ENCODE measurements at regions of chr19 and their contacts with region 1.

Region 1: DNA sequence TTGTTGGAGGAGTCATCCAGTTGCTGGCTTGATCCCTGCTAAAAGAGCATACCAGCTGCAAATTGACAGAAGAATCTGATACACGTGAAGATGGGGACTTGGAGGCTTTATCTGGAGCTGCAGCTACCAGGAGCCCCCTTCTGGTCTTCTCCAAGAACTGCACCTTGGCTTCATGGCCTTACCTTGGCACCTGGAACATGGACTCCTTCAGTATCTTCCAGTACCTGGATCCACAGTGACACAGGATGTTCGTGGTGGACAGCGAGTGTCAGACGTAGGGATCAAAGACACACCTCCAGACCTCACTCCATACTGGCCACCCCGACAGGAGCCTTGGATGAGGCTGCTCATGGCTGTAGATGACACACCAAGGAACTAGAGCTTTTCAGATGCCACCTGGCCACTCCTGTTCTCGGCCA is 9.9 kb upstream of the ACSBG2 start:
- DNase-seq: no peak
- H3K4me3 ChIP-seq: no peak overlapping the region
- H3K27me3 ChIP-seq: no peaks in the 10 kb centered on the region
- CTCF ChIP-seq: peak; percentile 93

Region 2: GRCh38 chr19:6038634-6039405 is 86.8 kb before region 1 on chr19:
- CTCF ChIA-PET with region 1: interaction called, 19 read pairs
- POLR2A ChIA-PET with region 1: no interaction called
- DNase-seq: no peak
- H3K4me3 ChIP-seq: no peak overlapping the region
- H3K27me3 ChIP-seq: no peaks in the 10 kb centered on the region
- CTCF ChIP-seq: no peak

Region 3: DNA sequence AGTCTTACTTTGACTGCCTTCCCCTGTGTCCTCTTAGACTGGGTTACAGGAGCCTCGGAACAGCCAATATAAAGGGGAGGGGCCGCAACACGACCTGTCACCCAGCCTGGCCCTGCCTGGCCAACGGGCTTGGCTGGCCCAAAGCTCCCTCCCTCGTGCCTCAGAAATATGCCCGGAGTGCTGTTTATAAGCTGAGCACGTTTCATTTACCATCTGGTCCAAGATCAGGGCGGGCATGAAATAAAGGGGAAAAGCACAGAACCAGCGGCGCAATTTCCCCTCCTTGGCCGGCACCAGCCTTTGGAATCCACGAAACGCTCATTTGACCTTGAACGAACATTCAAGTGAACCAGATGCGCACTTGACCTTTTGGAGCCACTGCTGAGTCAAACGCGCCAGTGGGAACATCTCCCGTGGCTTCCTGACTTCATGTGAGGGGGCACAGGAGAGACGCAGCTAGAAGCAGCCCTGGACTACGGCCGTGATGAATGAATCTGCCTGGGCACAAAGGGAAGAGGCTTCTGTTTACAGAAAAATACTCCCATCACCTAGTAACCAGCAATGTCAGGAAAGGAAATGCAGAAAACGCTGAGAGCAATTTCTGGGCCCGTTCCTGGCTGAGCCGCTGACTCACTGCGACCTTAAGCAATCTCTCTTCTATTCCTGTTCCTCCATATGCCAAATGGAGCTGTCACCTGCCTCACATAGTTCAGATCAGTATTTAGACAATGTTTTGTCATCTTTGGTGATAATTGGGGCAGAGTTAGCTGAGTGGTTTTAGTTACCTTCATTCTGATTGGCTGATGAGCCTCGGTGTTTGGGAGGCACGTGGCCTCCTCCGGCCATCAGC is 68.6 kb before region 1 on chr19:
- CTCF ChIA-PET with region 1: interaction called, 94 read pairs
- POLR2A ChIA-PET with region 1: no interaction called
- DNase-seq: peak; percentile 95
- H3K4me3 ChIP-seq: no peak overlapping the region
- H3K27me3 ChIP-seq: no peaks in the 10 kb centered on the region
- CTCF ChIP-seq: no peak

Region 4: DNA sequence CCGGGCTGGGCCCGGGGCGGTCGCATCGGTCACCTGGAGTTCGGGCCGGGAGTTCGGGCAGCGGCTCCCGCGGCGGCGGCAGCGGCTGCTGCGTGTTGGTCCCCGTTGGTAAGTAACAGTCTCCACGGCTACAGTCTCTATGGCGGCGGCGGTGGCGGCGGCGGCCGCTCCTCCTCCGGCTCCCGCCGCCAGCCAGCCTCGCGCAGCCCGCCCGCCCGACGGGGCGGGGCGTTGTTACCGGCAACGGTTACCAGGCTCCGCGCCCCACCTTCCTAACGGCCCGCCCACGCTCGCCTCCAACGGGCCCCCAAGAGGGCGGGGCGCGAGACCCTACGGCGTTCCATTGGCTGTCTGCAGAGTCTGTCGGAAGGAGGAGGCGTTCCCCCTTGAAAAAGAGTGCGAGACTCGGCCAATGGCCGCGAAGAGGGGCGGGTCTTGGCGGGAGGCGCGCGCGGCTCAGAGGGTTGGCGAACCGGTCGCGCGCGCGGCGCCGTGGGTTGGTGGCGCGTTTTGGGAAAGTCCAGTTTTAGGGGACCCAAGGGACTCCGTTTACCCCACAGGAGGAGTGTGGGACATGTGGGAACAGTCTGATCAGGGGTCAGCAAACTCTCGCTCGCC is 15.1 kb before region 1 on chr19 and contains the start of gene RFX2:
- CTCF ChIA-PET with region 1: interaction called, 32 read pairs
- POLR2A ChIA-PET with region 1: no interaction called
- DNase-seq: peak; percentile 88
- H3K4me3 ChIP-seq: peak within 1 kb of the TSS; percentile 68
- H3K27me3 ChIP-seq: no peaks in the 10 kb centered on the region
- CTCF ChIP-seq: no peak
- polyA plus RNA-seq, gene RFX2: 4.9 and 5.7 TPM in 2 replicates

Region 5: DNA sequence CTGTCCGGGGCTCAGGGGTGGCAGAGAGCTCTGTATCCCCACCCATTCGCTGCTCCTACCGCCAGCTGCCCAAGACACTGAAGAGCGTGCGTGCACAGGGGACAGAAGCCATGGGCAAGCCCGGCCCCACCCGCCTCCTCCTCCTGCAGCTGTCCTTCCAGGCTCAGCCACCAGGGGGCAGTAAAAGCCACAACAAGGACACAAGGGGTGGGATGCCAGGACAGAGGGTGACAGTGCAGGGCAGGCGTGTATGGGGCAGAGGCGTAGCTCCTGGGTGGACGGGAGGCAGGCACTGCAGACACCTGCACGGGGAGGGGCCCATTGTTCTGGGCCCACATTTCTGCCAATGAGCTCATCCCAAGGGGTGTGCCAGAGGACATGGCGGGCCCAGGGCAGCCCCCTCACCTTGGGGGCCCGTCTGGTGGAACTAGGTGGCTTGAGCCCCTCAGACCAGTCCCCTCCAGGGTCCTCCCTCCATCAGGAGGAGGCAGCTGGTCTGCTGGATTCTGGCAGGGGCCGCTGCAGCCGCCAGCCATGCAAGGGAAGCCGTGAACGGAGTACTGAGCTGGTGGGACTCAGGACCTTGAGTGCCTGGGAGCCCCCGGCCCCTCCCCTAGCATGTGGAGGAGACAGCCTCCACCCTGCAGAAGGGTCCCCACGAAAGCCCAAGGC is 93.0 kb after region 1 on chr19:
- CTCF ChIA-PET with region 1: interaction called, 14 read pairs
- POLR2A ChIA-PET with region 1: no interaction called
- DNase-seq: no peak
- H3K4me3 ChIP-seq: no peak overlapping the region
- H3K27me3 ChIP-seq: no peaks in the 10 kb centered on the region
- CTCF ChIP-seq: peak; percentile 93

Region 6: DNA sequence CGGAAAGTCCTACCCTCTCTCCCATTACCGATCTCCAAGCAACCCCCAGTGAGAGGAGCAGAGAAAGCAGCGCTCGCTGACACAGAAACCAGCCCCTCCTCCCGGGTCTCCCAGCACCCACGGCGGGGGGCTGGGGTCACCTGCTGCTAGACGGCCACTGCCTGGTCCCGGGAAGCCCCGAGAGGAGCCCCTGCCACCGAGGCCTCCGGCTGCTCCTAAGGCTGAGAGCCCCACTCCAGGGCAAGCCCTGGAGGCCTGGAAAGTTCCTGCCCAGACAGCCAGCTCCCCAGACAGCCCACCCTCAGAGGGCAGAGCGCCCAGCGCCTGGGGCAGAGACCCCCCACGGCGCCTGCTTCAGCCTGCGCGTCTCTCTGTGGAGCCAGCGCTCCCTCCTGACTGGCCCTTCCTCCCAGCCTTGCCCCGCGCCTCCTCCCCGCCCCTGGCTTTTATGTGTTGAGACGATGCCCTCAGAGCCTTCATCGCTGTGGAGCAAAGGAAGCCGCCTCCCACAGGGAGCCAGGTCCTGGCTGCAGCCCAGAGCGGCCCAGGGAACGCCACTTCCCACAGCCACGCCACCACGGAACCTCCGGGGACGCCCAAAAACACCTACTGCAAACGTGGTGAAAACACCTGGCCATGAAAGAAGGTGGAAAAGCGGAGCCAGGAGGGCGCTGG is 103.1 kb after region 1 on chr19:
- CTCF ChIA-PET with region 1: no interaction called
- POLR2A ChIA-PET with region 1: no interaction called
- DNase-seq: no peak
- H3K4me3 ChIP-seq: no peak overlapping the region
- H3K27me3 ChIP-seq: no peaks in the 10 kb centered on the region
- CTCF ChIP-seq: no peak

Region 7: GRCh38 chr19:6238643-6239281 is 113.2 kb after region 1 on chr19:
- CTCF ChIA-PET with region 1: no interaction called
- POLR2A ChIA-PET with region 1: no interaction called
- DNase-seq: no peak
- H3K4me3 ChIP-seq: no peak overlapping the region
- H3K27me3 ChIP-seq: no peaks in the 10 kb centered on the region
- CTCF ChIP-seq: no peak

Measured in BJ (cell line).